ENCODE measurements at regions of chr19 and their contacts with region 1.

Region 1: DNA sequence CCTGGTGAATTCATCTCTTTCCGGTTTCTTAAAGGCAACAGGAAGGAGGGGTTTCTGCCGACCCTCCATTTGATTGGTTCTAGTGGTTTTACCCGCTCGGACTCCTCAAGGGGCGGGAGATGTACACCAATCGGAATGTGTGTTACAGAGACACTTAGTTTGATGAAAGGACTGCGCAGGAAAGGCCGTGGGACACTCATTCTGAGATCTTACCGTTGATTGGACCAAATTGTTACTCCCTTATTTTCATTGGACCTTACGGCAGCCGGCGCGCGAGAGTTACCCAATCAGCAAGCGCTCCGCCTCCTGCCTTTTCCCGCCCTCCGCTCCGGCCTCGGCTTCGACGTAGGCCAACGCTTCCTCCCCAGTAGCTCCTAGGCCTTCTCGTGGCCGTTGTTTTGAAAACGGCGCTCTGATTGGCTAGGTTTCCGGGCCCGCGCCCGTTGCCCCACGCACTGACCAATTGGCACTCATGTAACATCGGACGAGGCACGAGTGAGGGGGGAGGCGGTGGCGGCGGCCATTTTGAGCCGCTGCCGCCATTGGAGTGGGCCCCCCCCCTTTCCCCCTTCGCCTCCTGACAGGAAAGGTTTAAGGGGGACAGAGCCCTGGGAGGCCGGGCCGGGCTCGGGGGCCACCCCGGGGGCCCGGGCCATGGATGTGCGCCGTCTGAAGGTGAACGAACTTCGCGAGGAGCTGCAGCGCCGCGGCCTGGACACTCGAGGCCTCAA is at the start of gene HNRNPUL1:
- DNase-seq: peak; percentile 98 to 100 (median 100)
- ATAC-seq: peak; percentile 62
- H3K4me3 ChIP-seq: peak within 1 kb of the TSS; percentile 71 to 87
- H3K4me3 Mint-ChIP-seq: peak within 1 kb of the TSS; percentile 94
- H3K27ac ChIP-seq: peak within 1 kb of the TSS; percentile 97 to 98
- H3K27ac Mint-ChIP-seq: peak within 1 kb of the TSS; percentile 100
- H3K4me1 ChIP-seq: peaks cover 36% of the 10 kb centered on the region
- H3K4me1 Mint-ChIP-seq: peaks cover 43% of the 10 kb centered on the region
- H3K27me3 ChIP-seq: no peaks in the 10 kb centered on the region
- H3K27me3 Mint-ChIP-seq: no peaks in the 10 kb centered on the region
- CTCF ChIP-seq: no peak
- total RNA-seq, gene HNRNPUL1: 416 to 448 TPM

Region 2: DNA sequence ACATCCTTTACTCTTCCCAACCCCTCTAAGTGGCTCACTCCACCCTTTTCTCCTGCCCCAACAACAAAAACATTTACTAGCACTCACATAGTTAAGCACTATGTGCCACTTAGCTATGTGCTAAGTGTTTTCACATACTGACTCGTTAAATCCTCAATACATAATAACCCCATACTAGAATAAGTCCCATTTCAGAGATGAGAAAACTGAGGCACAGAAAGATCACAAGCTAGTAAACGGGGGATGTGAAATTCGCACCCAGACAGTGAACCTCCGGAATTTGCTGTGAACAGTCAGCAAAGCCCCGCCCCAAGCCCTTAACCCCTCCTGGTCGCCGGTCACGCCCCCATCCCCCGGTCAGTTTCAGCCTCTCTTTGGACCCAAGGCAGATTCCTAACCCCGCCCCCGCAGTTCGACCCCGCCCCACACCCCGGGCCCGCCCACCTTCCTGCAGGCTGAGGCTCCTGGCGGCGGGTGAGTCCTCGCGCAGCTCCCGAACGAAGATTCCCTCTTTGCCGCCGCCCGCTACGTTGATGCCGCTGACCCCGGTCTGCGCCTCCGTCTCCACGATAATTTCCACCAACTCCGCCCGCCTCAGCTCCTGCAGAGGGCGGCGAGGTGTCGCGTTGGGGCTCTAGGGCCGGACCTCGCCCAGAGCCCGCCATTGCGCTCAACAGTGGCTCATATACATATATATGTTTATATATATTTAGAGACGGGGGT is 860.6 kb before region 1 on chr19:
- CTCF ChIA-PET with region 1: no interaction called
- POLR2A ChIA-PET with region 1: no interaction called
- intact Hi-C with region 1: loop called in 1 of 2 experiments (anchors 10 kb)
- DNase-seq: peak; percentile 56 to 83 (median 77)
- ATAC-seq: peak; percentile 55
- H3K4me3 ChIP-seq: peak overlapping the region; percentile 70 to 89
- H3K4me3 Mint-ChIP-seq: peak overlapping the region; percentile 95
- H3K27ac ChIP-seq: peak overlapping the region; percentile 56 to 63
- H3K27ac Mint-ChIP-seq: peak overlapping the region; percentile 84
- H3K4me1 ChIP-seq: peaks cover 13% of the 10 kb centered on the region
- H3K4me1 Mint-ChIP-seq: peaks cover 29% of the 10 kb centered on the region
- H3K27me3 ChIP-seq: no peaks in the 10 kb centered on the region
- H3K27me3 Mint-ChIP-seq: no peaks in the 10 kb centered on the region
- CTCF ChIP-seq: no peak

Region 3: DNA sequence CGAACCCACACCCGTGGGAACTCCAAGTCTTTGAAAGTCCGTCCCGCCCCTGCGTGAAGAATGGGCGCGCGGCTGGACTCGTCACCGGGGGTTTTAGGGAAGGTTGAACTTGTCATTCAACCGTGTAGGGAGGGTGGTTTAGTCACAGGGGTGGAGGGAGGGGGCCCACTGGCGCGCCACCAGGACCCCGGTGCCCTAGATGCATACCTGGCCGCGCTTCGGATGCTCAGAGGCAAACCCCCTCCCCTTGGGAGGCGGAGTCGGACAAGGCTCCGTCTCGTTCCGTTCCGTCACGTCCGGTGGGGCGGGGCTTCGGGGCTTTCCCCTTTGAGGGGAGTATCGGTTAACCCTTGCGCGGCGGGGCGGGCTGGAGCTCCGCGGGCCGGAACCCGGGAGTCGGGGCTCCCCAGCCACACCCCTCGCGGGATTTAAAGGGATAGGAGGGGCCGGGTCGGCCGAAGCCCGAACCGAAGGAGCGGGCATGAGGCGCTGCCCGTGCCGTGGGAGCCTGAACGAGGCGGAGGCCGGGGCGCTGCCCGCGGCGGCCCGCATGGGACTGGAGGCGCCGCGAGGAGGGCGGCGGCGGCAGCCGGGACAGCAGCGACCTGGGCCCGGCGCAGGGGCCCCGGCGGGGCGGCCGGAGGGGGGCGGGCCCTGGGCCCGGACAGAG is 547.2 kb before region 1 on chr19 and contains the starts of genes COQ8B and ITPKC:
- CTCF ChIA-PET with region 1: no interaction called
- POLR2A ChIA-PET with region 1: interaction called, 4 read pairs
- intact Hi-C with region 1: loop called in 1 of 2 experiments (anchors 2 kb)
- DNase-seq: peak; percentile 98 to 100 (median 100)
- ATAC-seq: peak; percentile 74
- H3K4me3 ChIP-seq: peak within 1 kb of the TSS; percentile 66 to 93
- H3K4me3 Mint-ChIP-seq: peak within 1 kb of the TSS; percentile 88
- H3K27ac ChIP-seq: peak within 1 kb of the TSS; percentile 88 to 89
- H3K27ac Mint-ChIP-seq: peak within 1 kb of the TSS; percentile 97
- H3K4me1 ChIP-seq: peaks cover 61% of the 10 kb centered on the region
- H3K4me1 Mint-ChIP-seq: peaks cover 70% of the 10 kb centered on the region
- H3K27me3 ChIP-seq: no peaks in the 10 kb centered on the region
- H3K27me3 Mint-ChIP-seq: no peaks in the 10 kb centered on the region
- CTCF ChIP-seq: no peak
- total RNA-seq, gene COQ8B: 14.0 to 14.2 TPM
- total RNA-seq, gene ITPKC: 5.9 to 6.4 TPM

Region 4: DNA sequence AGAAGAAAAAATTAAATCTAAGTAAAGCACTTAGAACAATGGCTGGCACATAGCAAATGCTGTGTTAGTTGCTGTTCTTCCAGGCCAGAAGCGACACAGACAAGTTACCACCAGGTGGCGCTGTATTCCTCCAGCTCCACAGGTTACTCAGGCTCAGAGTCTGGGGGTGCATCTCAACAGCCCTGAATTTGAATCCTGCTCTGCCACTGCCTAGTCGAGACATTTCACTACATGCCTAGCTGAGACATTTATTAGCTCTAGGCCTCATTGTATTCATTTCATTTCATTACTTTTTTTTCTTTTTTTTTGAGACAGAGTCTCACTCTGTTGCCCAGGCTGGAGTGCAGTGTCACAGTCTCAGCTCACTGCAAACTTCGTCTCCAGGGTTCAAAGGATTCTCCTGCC is 289.4 kb before region 1 on chr19:
- CTCF ChIA-PET with region 1: interaction called, 5 read pairs
- POLR2A ChIA-PET with region 1: interaction called, 15 read pairs
- intact Hi-C with region 1: loop called (anchors 1 to 2 kb)
- DNase-seq: peak; percentile 61 to 90 (median 80)
- ATAC-seq: peak; percentile 72
- H3K4me3 ChIP-seq: no peak overlapping the region
- H3K4me3 Mint-ChIP-seq: no peak overlapping the region
- H3K27ac ChIP-seq: no peak overlapping the region
- H3K27ac Mint-ChIP-seq: no peak overlapping the region
- H3K4me1 ChIP-seq: peaks cover 22% of the 10 kb centered on the region
- H3K4me1 Mint-ChIP-seq: peaks cover 29% of the 10 kb centered on the region
- H3K27me3 ChIP-seq: no peaks in the 10 kb centered on the region
- H3K27me3 Mint-ChIP-seq: peaks cover 10% of the 10 kb centered on the region
- CTCF ChIP-seq: peak; percentile 92

Region 5: GRCh38 chr19:41241859-41242258 is 22.2 kb before region 1 on chr19:
- CTCF ChIA-PET with region 1: no interaction called
- POLR2A ChIA-PET with region 1: no interaction called
- intact Hi-C with region 1: no loop called
- DNase-seq: no peak
- ATAC-seq: no peak
- H3K4me3 ChIP-seq: no peak overlapping the region
- H3K4me3 Mint-ChIP-seq: no peak overlapping the region
- H3K27ac ChIP-seq: no peak overlapping the region
- H3K27ac Mint-ChIP-seq: no peak overlapping the region
- H3K4me1 ChIP-seq: no peaks in the 10 kb centered on the region
- H3K4me1 Mint-ChIP-seq: no peaks in the 10 kb centered on the region
- H3K27me3 ChIP-seq: no peaks in the 10 kb centered on the region
- H3K27me3 Mint-ChIP-seq: no peaks in the 10 kb centered on the region
- CTCF ChIP-seq: no peak

Region 6: DNA sequence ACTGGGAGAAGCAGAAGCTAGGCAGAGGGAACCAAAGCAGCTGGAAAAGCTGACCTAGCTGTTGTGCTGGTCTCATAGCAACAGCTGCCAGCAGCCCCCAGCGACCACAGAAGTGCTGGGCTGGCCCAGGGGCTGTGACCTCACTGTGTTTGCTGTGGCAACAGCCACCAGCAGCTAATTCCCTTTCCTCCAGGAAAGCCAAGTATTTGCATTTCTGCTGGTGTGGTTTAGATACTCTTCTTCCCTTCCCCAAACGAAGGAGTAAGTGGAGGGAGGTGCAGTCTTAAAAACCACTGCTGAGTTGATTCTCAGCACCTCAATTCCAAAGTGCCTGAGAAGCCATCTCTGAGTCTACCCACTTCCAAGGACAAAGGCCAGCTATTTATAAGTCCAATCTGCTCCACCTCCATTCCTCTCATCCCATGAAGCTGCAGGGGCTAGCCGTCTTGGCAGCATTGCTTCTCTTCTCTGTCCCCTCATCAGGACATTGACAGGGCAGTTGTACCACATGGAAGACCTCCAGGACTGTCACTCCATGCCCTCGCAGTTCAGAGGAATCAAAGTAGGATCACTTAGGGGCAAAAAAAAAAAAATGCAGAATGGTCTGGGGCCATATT is 34.4 kb after region 1 on chr19:
- CTCF ChIA-PET with region 1: interaction called, 105 read pairs
- POLR2A ChIA-PET with region 1: interaction called, 48 read pairs
- intact Hi-C with region 1: no loop called
- DNase-seq: peak in 6 of 9 experiments; percentile 46 to 84 (median 68)
- ATAC-seq: peak; percentile 10
- H3K4me3 ChIP-seq: no peak overlapping the region
- H3K4me3 Mint-ChIP-seq: peak overlapping the region; percentile 19
- H3K27ac ChIP-seq: peak overlapping the region; percentile 37 to 75
- H3K27ac Mint-ChIP-seq: peak overlapping the region; percentile 89
- H3K4me1 ChIP-seq: peaks cover 75% of the 10 kb centered on the region
- H3K4me1 Mint-ChIP-seq: peaks cover 79% of the 10 kb centered on the region
- H3K27me3 ChIP-seq: no peaks in the 10 kb centered on the region
- H3K27me3 Mint-ChIP-seq: no peaks in the 10 kb centered on the region
- CTCF ChIP-seq: no peak

Region 7: DNA sequence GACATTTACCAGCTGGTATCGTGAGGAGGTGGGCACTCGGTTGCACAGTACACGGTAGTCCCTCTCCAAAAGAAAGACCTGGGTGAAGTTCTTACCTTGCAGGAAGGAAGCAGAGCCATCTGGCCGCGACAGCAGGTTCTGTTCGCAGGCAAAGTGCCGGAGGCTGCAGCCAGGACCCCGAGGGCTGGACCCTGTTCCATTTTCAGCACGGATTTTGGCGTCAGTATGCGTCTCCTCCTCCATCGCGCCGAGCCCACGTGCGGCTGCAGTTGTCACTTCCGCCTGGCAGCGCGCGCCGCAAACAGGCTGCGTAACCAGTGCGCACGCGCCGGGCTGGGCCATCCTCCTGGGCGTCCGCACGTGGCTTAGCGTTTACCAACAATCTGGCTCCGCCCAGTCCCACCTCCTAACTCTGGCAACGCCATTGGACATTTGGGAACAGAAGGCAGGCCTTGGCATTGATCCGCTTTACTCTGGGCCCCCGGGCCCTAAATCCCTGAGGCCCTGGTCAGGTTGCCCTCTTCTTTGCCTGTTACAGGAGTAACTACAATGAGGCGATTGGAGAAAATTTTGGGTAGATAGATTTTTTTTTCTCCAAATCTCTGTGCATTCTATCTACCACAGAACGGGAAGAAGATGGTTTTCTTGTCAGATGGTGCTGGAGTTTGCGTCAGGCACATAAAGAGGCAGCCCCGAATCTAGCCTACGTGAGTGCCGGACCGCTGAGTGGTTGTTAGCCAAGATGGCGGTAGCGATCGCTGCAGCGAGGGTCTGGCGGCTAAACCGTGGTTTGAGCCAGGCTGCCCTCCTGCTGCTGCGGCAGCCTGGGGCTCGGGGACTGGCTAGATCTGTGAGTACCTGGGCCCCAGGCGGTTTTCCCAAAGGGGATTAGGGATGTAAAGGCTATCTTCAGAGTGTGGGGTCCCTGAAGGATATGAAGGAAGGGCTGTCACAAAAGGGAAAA is 133.4 kb after region 1 on chr19 and contains the starts of genes BCKDHA and EXOSC5:
- CTCF ChIA-PET with region 1: no interaction called
- POLR2A ChIA-PET with region 1: no interaction called
- intact Hi-C with region 1: loop called (anchors 1 kb)
- DNase-seq: peak; percentile 97 to 100 (median 99)
- ATAC-seq: peak; percentile 97
- H3K4me3 ChIP-seq: peak within 1 kb of the TSS; percentile 84 to 97
- H3K4me3 Mint-ChIP-seq: peak within 1 kb of the TSS; percentile 98
- H3K27ac ChIP-seq: peak within 1 kb of the TSS; percentile 98
- H3K27ac Mint-ChIP-seq: peak within 1 kb of the TSS; percentile 100
- H3K4me1 ChIP-seq: peaks cover 28% of the 10 kb centered on the region
- H3K4me1 Mint-ChIP-seq: peaks cover 47% of the 10 kb centered on the region
- H3K27me3 ChIP-seq: no peaks in the 10 kb centered on the region
- H3K27me3 Mint-ChIP-seq: no peaks in the 10 kb centered on the region
- CTCF ChIP-seq: no peak
- total RNA-seq, gene BCKDHA: 19.4 to 20.5 TPM
- total RNA-seq, gene EXOSC5: 4.1 to 5.5 TPM

Measured in CD8-positive, alpha-beta T cell (primary cell).